GM13977 (cell line): ENCODE measurements at regions of chr7 and their contacts with region 1.

Region 1: GRCh38 chr7:30164567-30164966 is 29.8 kb downstream of the MTURN start:
- DNase-seq: peak; percentile 52
- CTCF ChIP-seq: peak; percentile 62

Region 2: DNA sequence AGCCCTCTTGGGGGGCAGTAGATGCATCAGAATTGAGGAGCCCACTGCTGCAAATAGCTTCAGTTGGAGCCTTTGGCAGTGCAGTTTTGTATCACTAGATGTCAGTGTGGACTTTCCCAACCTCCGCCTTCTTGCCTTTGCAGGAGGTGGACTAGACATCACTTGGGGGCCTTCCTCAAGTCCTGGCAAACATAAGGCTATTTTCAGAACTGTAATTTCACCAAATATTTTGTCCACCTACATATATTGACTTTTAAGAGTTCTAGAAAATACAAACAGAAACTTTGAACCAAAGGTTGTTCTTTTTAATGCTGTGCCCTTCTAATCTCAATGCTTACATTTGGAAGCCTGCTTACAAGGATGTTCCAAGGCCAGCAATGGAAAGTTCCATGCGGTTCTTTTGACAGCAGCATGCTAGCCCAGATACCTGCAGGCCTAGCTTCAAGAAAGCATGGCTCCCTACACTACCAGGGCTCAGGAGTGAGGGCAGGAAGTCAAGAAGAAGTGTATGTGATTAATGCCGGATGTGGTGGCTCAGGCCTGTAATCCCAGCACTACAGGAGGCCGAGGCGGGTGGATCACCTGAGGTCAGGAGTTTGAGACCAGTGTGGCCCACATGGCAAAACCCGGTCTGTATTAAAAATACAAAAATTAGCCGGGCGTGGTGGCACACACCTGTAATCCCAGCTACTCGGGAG is 111.8 kb after region 1 on chr7:
- in situ Hi-C with region 1: loop called (anchors 10 kb)
- DNase-seq: peak; percentile 32
- CTCF ChIP-seq: peak; percentile 87

Region 3: DNA sequence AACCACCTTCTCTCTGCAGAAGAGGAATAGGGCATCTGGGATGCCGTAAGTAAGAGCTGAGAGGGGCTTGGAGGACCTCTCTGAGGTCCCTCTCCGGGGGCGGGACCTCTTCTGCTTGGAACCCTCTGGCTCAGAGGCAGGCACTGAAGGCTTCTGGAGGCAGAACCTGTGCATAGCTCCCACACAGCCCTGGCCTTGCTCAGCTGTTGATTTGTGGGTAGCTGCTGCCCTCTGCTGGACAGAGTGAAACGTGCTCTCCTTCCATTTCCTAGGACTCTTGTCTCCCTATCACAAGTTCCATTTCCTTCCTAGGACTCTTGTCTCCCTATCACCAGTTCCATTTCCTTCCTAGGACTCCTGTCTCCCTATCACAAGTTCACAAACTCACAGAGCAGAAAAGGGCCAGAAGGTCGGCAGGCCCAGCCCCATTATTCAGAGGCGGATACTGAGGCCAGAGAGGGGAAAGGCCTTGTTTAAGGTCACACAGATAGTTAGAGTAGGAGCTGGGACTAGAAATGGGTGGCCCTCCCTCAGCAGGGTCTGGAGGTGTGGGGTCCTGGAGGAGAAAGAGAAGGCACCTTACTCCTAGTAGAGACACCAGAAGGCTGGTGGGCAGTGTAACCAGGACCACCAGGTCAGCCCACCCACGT is 399.8 kb after region 1 on chr7:
- in situ Hi-C with region 1: loop called (anchors 25 kb)
- DNase-seq: peak; percentile 80
- CTCF ChIP-seq: peak; percentile 86